GM12878 (cell line): ENCODE measurements at regions of chr10 and their contacts with region 1.

Region 1: GRCh38 chr10:70267161-70267933 is 16.5 kb downstream of the NPFFR1 start:
- DNase-seq: no peak
- ATAC-seq: peak; percentile 35
- H3K4me3 ChIP-seq: no peak overlapping the region
- H3K27ac ChIP-seq: no peak overlapping the region
- H3K4me1 ChIP-seq: peaks cover 16% of the 10 kb centered on the region
- H3K27me3 ChIP-seq: no peaks in the 10 kb centered on the region
- CTCF ChIP-seq: peak; percentile 10 to 41 (median 27); a peak in 4 of 6 replicates
- EP300 ChIP-seq: no peak
- POLR2A ChIP-seq: no peak
- RAD21 ChIP-seq: no peak

Region 2: DNA sequence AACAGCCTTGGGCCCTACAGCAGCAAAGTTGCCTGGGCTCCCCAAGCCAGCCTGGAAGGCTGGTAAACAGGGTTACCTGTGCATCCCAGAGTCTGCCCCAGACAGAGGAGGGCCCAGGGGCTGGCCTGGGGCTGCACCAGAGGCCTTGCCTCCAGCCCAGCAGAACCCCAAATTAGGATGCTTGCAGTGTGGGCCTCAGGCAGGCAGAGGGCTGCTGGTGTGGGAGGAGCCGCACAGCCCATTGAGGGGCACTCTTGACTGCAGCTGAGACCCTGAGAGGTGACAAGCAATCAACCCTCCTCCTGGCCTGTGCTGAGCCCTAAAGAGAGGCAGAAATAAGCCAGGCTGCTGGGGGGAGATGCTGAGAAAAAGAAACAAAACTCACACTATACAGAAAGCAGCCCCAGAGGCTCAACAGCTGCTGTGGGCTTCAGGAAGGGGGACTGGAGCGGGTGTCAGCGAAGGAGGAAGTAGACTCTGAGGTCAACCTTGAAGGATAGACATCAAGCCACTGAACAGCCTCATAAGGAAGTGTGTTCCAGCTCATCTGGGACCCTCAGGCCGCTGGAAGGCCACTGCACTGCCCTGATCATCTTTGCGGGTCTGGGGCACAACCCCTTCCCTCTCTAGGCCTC is 141.3 kb before region 1 on chr10:
- CTCF ChIA-PET with region 1: no interaction called
- POLR2A ChIA-PET with region 1: no interaction called
- RAD21 ChIA-PET with region 1: no interaction called
- SMC1A ChIA-PET with region 1: no interaction called
- in situ Hi-C with region 1: no loop called
- intact Hi-C with region 1: no loop called
- DNase-seq: no peak
- ATAC-seq: peak; percentile 66
- H3K4me3 ChIP-seq: no peak overlapping the region
- H3K27ac ChIP-seq: peak overlapping the region; percentile 63
- H3K4me1 ChIP-seq: peaks cover 12% of the 10 kb centered on the region
- H3K27me3 ChIP-seq: no peaks in the 10 kb centered on the region
- CTCF ChIP-seq: no peak
- EP300 ChIP-seq: no peak
- POLR2A ChIP-seq: no peak
- RAD21 ChIP-seq: no peak

Region 3: GRCh38 chr10:70227548-70228320 is 39.6 kb before region 1 on chr10:
- CTCF ChIA-PET with region 1: interaction called, 133 read pairs
- POLR2A ChIA-PET with region 1: interaction called, 5 read pairs
- RAD21 ChIA-PET with region 1: interaction called, 85 read pairs
- SMC1A ChIA-PET with region 1: interaction called, 45 read pairs
- in situ Hi-C with region 1: no loop called
- intact Hi-C with region 1: loop called (anchors 5 kb)
- DNase-seq: no peak
- ATAC-seq: peak; percentile 35
- H3K4me3 ChIP-seq: no peak overlapping the region
- H3K27ac ChIP-seq: no peak overlapping the region
- H3K4me1 ChIP-seq: peaks cover 10% of the 10 kb centered on the region
- H3K27me3 ChIP-seq: no peaks in the 10 kb centered on the region
- CTCF ChIP-seq: no peak
- EP300 ChIP-seq: no peak
- POLR2A ChIP-seq: no peak
- RAD21 ChIP-seq: no peak

Region 4: GRCh38 chr10:70233109-70233938 is 34.0 kb before region 1 on chr10 and contains the start of gene PPA1:
- CTCF ChIA-PET with region 1: interaction called, 21 read pairs
- POLR2A ChIA-PET with region 1: interaction called, 5 read pairs
- RAD21 ChIA-PET with region 1: interaction called, 22 read pairs
- SMC1A ChIA-PET with region 1: interaction called, 22 read pairs
- in situ Hi-C with region 1: no loop called
- intact Hi-C with region 1: loop called (anchors 5 kb)
- DNase-seq: peak; percentile 80
- ATAC-seq: peak; percentile 92
- H3K4me3 ChIP-seq: peak within 1 kb of the TSS; percentile 93
- H3K27ac ChIP-seq: peak within 1 kb of the TSS; percentile 76
- H3K4me1 ChIP-seq: no peaks in the 10 kb centered on the region
- H3K27me3 ChIP-seq: no peaks in the 10 kb centered on the region
- CTCF ChIP-seq: peak in 2 of 3 experiments; percentile 20 to 31; a peak in 3 of 6 replicates
- EP300 ChIP-seq: no peak
- POLR2A ChIP-seq: peak; percentile 95
- RAD21 ChIP-seq: no peak
- polyA plus RNA-seq, gene PPA1: 224 to 386 TPM

Region 5: GRCh38 chr10:70293169-70293813 is 25.9 kb after region 1 on chr10:
- CTCF ChIA-PET with region 1: interaction called, 22 read pairs
- POLR2A ChIA-PET with region 1: interaction called, 20 read pairs
- RAD21 ChIA-PET with region 1: interaction called, 32 read pairs
- SMC1A ChIA-PET with region 1: interaction called, 50 read pairs
- in situ Hi-C with region 1: no loop called
- intact Hi-C with region 1: no loop called
- DNase-seq: peak; percentile 71
- ATAC-seq: peak; percentile 96
- H3K4me3 ChIP-seq: no peak overlapping the region
- H3K27ac ChIP-seq: peak overlapping the region; percentile 41
- H3K4me1 ChIP-seq: peaks cover 16% of the 10 kb centered on the region
- H3K27me3 ChIP-seq: no peaks in the 10 kb centered on the region
- CTCF ChIP-seq: no peak
- EP300 ChIP-seq: peak; percentile 77 to 84; a peak in 3 of 4 replicates
- POLR2A ChIP-seq: no peak
- RAD21 ChIP-seq: no peak

Region 6: GRCh38 chr10:70348228-70348850 is 81.0 kb after region 1 on chr10:
- CTCF ChIA-PET with region 1: interaction called, 756 read pairs
- POLR2A ChIA-PET with region 1: no interaction called
- RAD21 ChIA-PET with region 1: interaction called, 50 read pairs
- SMC1A ChIA-PET with region 1: interaction called, 59 read pairs
- in situ Hi-C with region 1: no loop called
- intact Hi-C with region 1: no loop called
- DNase-seq: no peak
- ATAC-seq: peak; percentile 94
- H3K4me3 ChIP-seq: no peak overlapping the region
- H3K27ac ChIP-seq: no peak overlapping the region
- H3K4me1 ChIP-seq: peaks cover 11% of the 10 kb centered on the region
- H3K27me3 ChIP-seq: no peaks in the 10 kb centered on the region
- CTCF ChIP-seq: peak; percentile 61 to 65 (median 64)
- EP300 ChIP-seq: no peak
- POLR2A ChIP-seq: no peak
- RAD21 ChIP-seq: peak; percentile 68